Calu3 (cell line): ENCODE measurements at regions of chr18 and their contacts with region 1.

Region 1: GRCh38 chr18:12470382-12471075 is 62.8 kb downstream of the PRELID3A start:
- DNase-seq: no peak
- H3K4me3 Mint-ChIP-seq: no peak overlapping the region
- H3K27ac Mint-ChIP-seq: no peak overlapping the region
- H3K4me1 Mint-ChIP-seq: no peaks in the 10 kb centered on the region
- H3K27me3 Mint-ChIP-seq: no peaks in the 10 kb centered on the region
- CTCF ChIP-seq: no peak

Region 2: DNA sequence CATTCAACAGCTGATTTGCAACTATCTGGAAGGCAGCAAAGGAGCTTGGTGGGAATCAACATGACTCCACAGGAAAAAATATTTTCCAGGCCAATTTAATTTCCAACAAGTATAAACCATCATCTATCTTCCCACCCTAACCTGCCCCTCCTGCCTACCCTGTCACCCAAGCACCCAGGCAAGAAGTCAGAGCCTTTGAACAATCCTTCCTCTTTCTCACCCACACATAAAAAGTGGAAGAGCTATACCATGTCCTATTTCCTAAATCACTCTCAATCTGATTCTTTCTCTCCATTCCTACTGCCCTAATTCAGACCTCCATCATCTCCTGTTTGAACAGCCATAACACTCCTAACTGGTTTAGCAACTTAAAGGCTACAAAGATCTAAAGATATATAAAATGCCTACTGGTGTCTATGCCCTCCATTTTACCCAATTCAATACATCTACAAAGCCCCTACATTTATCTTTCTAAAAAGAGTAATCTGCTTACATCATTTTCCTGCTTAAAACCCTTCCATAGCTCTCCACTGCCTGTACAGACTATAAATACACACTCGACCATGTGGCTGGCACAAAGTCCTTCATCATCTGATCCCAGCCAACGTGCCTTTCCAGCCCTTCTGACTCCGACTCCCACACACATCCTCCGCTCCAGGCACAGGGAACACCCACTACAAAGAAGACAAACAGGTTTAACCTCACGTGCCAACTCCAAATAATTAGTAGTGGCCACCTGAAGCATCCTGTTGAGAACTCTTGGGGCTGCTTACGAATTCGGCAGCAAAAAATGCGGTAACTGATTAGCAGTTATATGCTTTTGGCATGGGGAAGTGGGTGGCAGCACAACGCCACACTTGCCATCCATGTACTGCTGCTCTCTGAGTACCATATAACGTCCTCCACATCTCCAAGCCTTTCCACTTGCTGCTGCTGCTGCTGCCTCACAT is 175.0 kb after region 1 on chr18:
- CTCF ChIA-PET with region 1: interaction called, 10 read pairs
- intact Hi-C with region 1: no loop called
- DNase-seq: peak; percentile 57
- H3K4me3 Mint-ChIP-seq: peak overlapping the region; percentile 47
- H3K27ac Mint-ChIP-seq: peak overlapping the region; percentile 61
- H3K4me1 Mint-ChIP-seq: peaks cover 44% of the 10 kb centered on the region
- H3K27me3 Mint-ChIP-seq: no peaks in the 10 kb centered on the region
- CTCF ChIP-seq: no peak